Activated T-helper 1 cell treated with anti-CD3 and anti-CD28 coated beads, Interleukin-12 subunit alpha, Interleukin-12 subunit beta, Interleukin-2, Interleukin-4 antibody, amounts not matched to agents 30 ng/mL and 10 ng/mL and 1 ng/mL, durations not matched to agents 14 hours and 24 hours and 36 hours (primary cell): ENCODE measurements at regions of chr16 and their contacts with region 1.

Region 1: DNA sequence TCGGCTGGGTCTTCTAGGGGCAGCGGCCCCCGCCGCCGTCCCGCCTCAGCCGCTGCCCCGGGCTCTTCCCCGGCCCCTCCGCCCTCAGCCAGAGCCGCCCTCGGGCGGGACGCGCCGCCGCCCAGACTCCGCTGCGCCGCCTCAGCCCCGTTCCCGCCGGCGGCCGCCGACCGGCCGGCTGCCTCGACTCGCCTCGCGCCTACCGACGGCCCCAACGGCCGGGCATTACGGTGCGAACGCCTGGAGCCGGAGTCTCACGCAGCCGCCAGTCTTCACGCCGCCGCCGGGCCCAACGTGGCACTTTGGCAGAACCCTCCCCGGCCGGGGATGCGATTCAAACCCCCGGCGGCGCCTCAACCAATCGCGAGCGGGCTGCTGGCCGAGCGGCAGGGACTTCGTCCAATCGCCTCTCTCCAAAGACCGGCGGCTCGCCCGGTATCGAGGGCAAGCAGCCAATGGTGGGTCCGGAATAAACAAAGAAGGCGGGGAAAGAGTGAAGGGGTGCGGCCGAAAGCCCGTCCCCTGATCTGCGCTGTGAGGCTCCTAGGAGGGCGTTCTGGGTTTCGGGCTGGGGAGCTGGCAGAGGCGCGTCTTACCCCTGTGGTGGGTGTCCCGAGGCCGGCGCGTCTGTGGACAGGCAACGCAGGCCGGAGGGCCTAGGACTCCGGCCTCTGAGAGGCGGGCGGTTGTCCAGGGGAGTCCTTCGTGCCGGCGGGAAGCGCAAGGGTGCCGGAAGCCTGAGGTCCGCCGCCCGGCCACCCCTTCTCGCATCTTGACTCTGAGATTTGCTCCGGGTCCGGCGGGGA is at the start of gene CDR2:
- DNase-seq: peak; percentile 99
- H3K4me3 Mint-ChIP-seq: peak within 1 kb of the TSS; percentile 97
- H3K27ac Mint-ChIP-seq: peak within 1 kb of the TSS; percentile 91
- H3K4me1 Mint-ChIP-seq: peaks cover 44% of the 10 kb centered on the region
- H3K27me3 Mint-ChIP-seq: peaks cover 2% of the 10 kb centered on the region
- total RNA-seq, gene CDR2: 43.5 and 47.2 TPM in 2 replicates

Region 2: DNA sequence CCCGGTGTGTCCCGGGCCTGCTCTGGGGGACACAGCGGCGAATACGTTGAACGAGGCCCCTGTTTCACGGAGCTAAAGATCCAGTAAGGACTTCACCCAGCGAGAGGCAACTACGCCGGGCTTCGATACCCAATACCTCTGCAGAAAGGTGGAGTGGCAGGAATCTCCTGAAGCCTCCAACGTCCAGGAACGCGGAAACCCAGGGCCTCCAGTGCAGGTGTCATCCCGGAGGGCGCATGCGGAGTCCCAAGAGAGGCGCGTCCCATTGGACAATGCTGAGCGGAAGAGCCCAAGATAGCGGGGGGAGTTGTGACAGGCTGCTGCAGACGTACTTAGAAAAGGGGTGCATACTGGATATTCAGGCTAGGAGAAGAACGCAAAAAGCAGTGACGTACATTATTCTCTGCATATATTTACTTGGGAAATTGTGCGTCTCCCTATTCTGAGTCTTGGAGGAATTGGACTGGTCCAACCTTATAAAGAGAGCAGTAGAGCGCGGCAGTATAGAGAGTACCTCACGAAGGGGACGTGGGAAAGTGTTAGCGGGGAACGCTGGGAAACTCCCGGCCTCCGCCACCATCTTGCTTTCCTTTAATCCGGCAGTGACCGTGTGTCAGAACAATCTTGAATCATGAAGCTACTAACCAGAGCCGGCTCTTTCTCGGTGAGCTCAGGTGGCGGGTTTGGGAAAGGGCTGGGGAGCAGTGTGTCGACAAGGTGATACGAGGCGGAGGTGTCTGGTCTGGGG is 421.5 kb before region 1 on chr16 and contains the start of gene UQCRC2:
- intact Hi-C with region 1: loop called (anchors 5 kb)
- DNase-seq: peak; percentile 85
- H3K4me3 Mint-ChIP-seq: peak within 1 kb of the TSS; percentile 99
- H3K27ac Mint-ChIP-seq: peak within 1 kb of the TSS; percentile 95
- H3K4me1 Mint-ChIP-seq: peaks cover 50% of the 10 kb centered on the region
- H3K27me3 Mint-ChIP-seq: no peaks in the 10 kb centered on the region
- total RNA-seq, gene UQCRC2: 235 and 260 TPM in 2 replicates

Region 3: GRCh38 chr16:22007509-22008214 is 366.9 kb before region 1 on chr16 and contains the start of gene MOSMO:
- intact Hi-C with region 1: loop called (anchors 5 kb)
- DNase-seq: peak; percentile 62
- H3K4me3 Mint-ChIP-seq: peak within 1 kb of the TSS; percentile 92
- H3K27ac Mint-ChIP-seq: peak within 1 kb of the TSS; percentile 79
- H3K4me1 Mint-ChIP-seq: peaks cover 49% of the 10 kb centered on the region
- H3K27me3 Mint-ChIP-seq: peaks cover 10% of the 10 kb centered on the region
- total RNA-seq, gene MOSMO: 12.7 and 16.3 TPM in 2 replicates

Region 4: DNA sequence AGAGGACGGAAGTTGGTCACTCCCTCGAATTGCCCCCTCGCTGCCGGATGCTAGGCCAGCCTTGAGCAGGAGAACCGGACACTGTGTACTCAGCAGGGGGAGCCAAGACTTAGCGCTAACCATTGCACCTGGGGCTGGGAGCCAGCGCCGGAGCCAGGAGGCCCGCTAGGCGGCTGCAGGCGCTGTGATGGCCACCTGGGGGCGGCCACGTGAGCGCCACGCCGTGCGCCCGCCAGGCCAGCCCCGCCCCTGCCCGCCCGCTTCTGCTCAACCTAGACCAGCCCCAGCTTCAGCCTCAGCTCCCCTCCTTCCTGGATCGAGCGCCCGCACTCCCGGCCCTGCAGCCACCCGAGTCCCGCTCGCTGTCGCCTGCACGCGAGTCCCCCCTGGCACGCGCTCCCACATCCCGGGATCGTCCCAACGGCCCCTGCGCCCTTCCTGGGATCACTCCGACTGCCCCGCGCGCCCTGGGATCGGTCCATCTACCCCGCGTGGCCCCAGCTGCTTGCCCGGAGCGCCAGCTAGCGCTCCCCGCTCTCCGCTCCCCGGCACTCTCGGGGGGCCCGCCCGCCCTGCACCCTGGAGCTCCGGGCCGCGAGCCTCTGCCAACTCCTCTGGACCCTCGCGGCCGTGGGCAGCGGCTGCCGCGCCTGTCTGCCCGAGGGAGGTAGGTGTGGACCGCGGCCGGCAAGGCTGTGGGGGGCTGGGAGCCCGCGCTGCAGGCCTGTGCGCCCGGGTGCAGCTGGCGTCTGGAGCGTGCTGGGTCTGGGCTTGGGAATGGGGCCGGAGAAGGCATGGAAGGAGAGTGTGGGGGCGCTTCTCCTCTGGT is 168.3 kb before region 1 on chr16 and contains the start of gene EEF2K:
- intact Hi-C with region 1: loop called (anchors 2 kb)
- DNase-seq: peak; percentile 77
- H3K4me3 Mint-ChIP-seq: peak within 1 kb of the TSS; percentile 91
- H3K27ac Mint-ChIP-seq: peak within 1 kb of the TSS; percentile 91
- H3K4me1 Mint-ChIP-seq: peaks cover 27% of the 10 kb centered on the region
- H3K27me3 Mint-ChIP-seq: no peaks in the 10 kb centered on the region
- total RNA-seq, gene EEF2K: 28.3 and 30.5 TPM in 2 replicates

Region 5: DNA sequence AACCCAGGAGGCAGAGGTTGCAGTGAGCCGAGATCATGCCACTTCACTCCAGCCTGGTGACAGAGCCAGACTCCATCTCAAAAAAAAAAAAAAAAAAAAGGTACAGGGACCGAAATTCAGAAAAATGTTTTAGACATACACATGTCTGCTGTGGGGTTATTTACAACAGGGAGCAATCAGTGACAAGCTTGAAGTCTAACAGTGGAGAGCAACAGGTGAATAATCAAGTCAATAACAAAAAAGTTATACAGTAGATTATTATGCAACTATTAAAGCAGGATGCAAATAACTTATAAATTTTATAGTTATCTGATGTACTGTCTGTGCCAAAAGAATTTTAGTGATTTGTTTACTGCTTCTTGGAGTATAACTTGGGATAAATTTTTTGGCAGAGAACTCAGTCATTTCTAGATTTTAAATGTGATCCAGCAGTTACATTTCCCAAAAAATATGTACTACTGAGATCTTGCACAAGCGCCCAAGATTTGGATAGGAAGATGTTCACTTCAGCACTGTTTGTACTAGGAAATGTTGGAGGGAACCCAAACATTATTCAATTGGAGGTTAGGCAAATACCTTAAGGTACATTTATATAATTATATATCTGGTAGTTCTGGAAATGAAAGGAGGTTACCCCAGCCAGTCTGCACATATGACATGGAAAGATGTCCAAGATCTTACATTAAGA is 134.3 kb before region 1 on chr16:
- intact Hi-C with region 1: no loop called
- DNase-seq: no peak
- H3K4me3 Mint-ChIP-seq: no peak overlapping the region
- H3K27ac Mint-ChIP-seq: no peak overlapping the region
- H3K4me1 Mint-ChIP-seq: peaks cover 24% of the 10 kb centered on the region
- H3K27me3 Mint-ChIP-seq: no peaks in the 10 kb centered on the region

Region 6: DNA sequence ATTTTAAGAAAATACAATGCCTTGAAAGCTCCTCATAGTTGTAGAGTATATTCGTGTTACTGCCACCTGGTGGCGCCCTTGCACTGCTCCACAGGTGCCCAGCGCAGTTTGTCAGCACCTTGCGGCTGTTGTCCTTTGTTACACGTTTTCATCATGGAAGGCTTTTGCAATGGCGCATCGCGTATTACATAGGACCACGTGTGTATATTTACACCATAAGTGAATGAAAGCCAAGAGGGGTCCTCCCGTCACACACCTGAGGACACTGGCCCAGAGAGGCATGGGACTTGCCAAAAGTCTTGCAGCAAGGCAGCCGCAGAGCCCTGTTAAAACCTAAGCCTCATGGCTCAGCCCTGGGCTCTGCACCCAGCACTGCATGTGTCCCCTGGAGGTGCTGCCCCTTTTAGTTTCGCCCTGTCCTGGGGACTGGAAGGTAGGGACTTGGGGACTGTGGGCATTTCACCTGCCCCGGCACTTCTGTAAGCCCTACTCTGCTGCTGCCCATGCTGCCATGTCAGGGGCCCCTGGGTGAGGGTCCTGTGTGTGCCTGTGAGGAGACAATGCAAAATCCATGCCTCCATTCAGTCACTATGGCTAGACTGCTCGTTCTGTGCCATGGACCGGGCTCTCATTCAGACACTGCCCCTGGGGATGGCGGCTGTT is 53.0 kb before region 1 on chr16:
- intact Hi-C with region 1: loop called (anchors 1 kb)
- DNase-seq: peak; percentile 57
- H3K4me3 Mint-ChIP-seq: no peak overlapping the region
- H3K27ac Mint-ChIP-seq: peak overlapping the region; percentile 48
- H3K4me1 Mint-ChIP-seq: no peaks in the 10 kb centered on the region
- H3K27me3 Mint-ChIP-seq: no peaks in the 10 kb centered on the region

Region 7: DNA sequence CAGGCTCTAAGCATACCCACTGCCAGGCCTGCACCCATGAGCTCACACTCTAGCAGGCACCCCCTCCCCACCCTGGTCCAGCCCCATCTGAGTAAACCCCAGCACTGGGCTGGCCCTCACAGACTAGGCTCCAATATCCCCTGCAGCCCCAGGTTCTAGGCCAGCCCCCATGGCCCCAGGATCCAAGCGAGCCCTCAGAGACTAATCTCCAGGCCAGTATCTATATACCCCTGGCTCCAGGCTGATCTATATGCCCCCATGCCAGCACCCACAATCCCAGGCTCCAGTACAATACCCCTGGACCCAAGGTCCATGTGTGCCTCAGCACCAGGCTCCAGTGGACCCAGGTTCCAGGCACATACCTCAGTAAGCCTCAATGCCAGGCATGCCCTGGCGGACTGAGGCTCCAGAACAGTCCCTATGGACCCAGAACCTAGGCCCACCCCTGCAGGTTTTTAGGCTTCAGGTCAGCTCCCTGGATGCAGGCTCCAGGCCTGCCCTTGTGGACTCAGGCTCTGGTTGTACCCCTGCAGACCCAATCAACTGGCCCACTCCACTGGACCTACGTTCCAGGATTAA is 38.8 kb before region 1 on chr16:
- intact Hi-C with region 1: loop called (anchors 5 kb)
- DNase-seq: no peak
- H3K4me3 Mint-ChIP-seq: no peak overlapping the region
- H3K27ac Mint-ChIP-seq: no peak overlapping the region
- H3K4me1 Mint-ChIP-seq: peaks cover 22% of the 10 kb centered on the region
- H3K27me3 Mint-ChIP-seq: no peaks in the 10 kb centered on the region

Region 8: GRCh38 chr16:22353191-22353919 is 21.2 kb before region 1 on chr16:
- intact Hi-C with region 1: loop called (anchors 1 kb)
- DNase-seq: peak; percentile 6
- H3K4me3 Mint-ChIP-seq: peak overlapping the region; percentile 48
- H3K27ac Mint-ChIP-seq: peak overlapping the region; percentile 94
- H3K4me1 Mint-ChIP-seq: peaks cover 58% of the 10 kb centered on the region
- H3K27me3 Mint-ChIP-seq: no peaks in the 10 kb centered on the region